ENCODE measurements at regions of chr1 and their contacts with region 1.

Region 1: GRCh38 chr1:43171876-43172526 is at the starts of genes CFAP57 and EBNA1BP2:
- DNase-seq: peak; percentile 83 to 97 (median 88)
- ATAC-seq: peak; percentile 75
- H3K4me3 ChIP-seq: peak within 1 kb of the TSS; percentile 93
- H3K4me3 Mint-ChIP-seq: peak within 1 kb of the TSS; percentile 96
- H3K27ac ChIP-seq: peak within 1 kb of the TSS; percentile 25 to 69
- H3K27ac Mint-ChIP-seq: peak within 1 kb of the TSS; percentile 82
- H3K4me1 ChIP-seq: peaks cover 14% of the 10 kb centered on the region
- H3K4me1 Mint-ChIP-seq: peaks cover 33% of the 10 kb centered on the region
- H3K27me3 ChIP-seq: peaks cover 9 to 14% of the 10 kb centered on the region in 2 experiments
- H3K27me3 Mint-ChIP-seq: peaks cover 16% of the 10 kb centered on the region
- CTCF ChIP-seq: no peak
- total RNA-seq, gene CFAP57: not detected
- total RNA-seq, gene EBNA1BP2: 14.8 to 15.1 TPM

Region 2: GRCh38 chr1:41360993-41361753 is 1810.8 kb before region 1 on chr1 and contains the start of gene FOXO6:
- CTCF ChIA-PET with region 1: no interaction called
- POLR2A ChIA-PET with region 1: no interaction called
- intact Hi-C with region 1: loop called in 1 of 2 experiments (anchors 10 kb)
- DNase-seq: peak; percentile 86 to 97 (median 93)
- ATAC-seq: peak; percentile 86
- H3K4me3 ChIP-seq: peak within 1 kb of the TSS; percentile 42
- H3K4me3 Mint-ChIP-seq: peak within 1 kb of the TSS; percentile 89
- H3K27ac ChIP-seq: no peak within 1 kb of the TSS
- H3K27ac Mint-ChIP-seq: peak within 1 kb of the TSS; percentile 77
- H3K4me1 ChIP-seq: peaks cover 34% of the 10 kb centered on the region
- H3K4me1 Mint-ChIP-seq: peaks cover 19% of the 10 kb centered on the region
- H3K27me3 ChIP-seq: peaks cover 19 to 25% of the 10 kb centered on the region in 2 experiments
- H3K27me3 Mint-ChIP-seq: peaks cover 30% of the 10 kb centered on the region
- CTCF ChIP-seq: peak; percentile 18
- total RNA-seq, gene FOXO6: 1.2 to 2.2 TPM

Region 3: GRCh38 chr1:42681741-42682483 is 490.1 kb before region 1 on chr1 and contains the start of gene YBX1:
- CTCF ChIA-PET with region 1: no interaction called
- POLR2A ChIA-PET with region 1: no interaction called
- intact Hi-C with region 1: loop called in 1 of 2 experiments (anchors 5 kb)
- DNase-seq: peak; percentile 89 to 99 (median 93)
- ATAC-seq: peak; percentile 90
- H3K4me3 ChIP-seq: peak within 1 kb of the TSS; percentile 80
- H3K4me3 Mint-ChIP-seq: peak within 1 kb of the TSS; percentile 100
- H3K27ac ChIP-seq: peak within 1 kb of the TSS; percentile 83 to 87
- H3K27ac Mint-ChIP-seq: peak within 1 kb of the TSS; percentile 94
- H3K4me1 ChIP-seq: peaks cover 36% of the 10 kb centered on the region
- H3K4me1 Mint-ChIP-seq: peaks cover 50% of the 10 kb centered on the region
- H3K27me3 ChIP-seq: no peaks in the 10 kb centered on the region
- H3K27me3 Mint-ChIP-seq: no peaks in the 10 kb centered on the region
- CTCF ChIP-seq: no peak
- total RNA-seq, gene YBX1: 372 to 389 TPM

Region 4: DNA sequence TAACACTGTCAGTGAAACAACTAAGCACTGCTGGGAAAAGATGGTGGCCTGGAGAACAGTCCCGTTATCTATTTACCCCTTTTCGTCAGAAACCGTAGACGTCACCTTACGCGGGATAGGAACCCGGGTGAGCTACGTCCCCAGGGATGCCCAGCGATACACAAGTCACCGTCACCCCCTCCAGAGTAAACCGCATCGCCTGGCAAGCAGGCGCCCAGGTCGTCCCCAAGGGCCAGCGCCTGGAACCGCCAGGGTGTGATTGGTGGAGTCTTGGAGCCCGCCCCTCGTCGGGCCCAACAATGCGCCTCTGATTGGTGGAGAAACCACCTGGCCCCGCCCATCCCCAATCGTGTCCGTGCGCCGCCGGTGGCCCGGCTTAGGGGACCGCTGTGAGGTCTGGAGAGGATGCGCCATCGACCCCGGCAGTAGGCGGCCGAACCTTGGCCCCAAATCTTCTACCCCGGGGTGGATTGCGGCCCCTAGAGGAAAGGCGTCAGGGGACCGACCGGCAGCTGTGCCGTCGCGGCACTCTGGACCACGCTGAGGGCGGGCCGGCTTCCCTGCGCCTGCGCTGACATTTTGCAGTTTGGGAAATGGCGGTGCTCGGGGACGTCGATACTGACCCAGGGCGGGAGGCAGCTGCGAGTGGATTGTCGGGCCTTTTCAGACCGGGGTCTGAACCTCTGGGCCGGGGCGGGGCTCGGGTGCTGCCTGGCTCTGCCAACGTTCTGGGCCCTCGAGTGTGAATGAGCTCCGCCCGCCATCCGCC is 247.7 kb before region 1 on chr1:
- CTCF ChIA-PET with region 1: no interaction called
- POLR2A ChIA-PET with region 1: no interaction called
- intact Hi-C with region 1: loop called in 1 of 2 experiments (anchors 5 kb)
- DNase-seq: peak; percentile 81 to 94 (median 88)
- ATAC-seq: peak; percentile 89
- H3K4me3 ChIP-seq: peak overlapping the region; percentile 81
- H3K4me3 Mint-ChIP-seq: peak overlapping the region; percentile 94
- H3K27ac ChIP-seq: peak overlapping the region; percentile 66 to 86
- H3K27ac Mint-ChIP-seq: peak overlapping the region; percentile 84
- H3K4me1 ChIP-seq: peaks cover 22% of the 10 kb centered on the region
- H3K4me1 Mint-ChIP-seq: peaks cover 40% of the 10 kb centered on the region
- H3K27me3 ChIP-seq: no peaks in the 10 kb centered on the region
- H3K27me3 Mint-ChIP-seq: no peaks in the 10 kb centered on the region
- CTCF ChIP-seq: no peak

Region 5: DNA sequence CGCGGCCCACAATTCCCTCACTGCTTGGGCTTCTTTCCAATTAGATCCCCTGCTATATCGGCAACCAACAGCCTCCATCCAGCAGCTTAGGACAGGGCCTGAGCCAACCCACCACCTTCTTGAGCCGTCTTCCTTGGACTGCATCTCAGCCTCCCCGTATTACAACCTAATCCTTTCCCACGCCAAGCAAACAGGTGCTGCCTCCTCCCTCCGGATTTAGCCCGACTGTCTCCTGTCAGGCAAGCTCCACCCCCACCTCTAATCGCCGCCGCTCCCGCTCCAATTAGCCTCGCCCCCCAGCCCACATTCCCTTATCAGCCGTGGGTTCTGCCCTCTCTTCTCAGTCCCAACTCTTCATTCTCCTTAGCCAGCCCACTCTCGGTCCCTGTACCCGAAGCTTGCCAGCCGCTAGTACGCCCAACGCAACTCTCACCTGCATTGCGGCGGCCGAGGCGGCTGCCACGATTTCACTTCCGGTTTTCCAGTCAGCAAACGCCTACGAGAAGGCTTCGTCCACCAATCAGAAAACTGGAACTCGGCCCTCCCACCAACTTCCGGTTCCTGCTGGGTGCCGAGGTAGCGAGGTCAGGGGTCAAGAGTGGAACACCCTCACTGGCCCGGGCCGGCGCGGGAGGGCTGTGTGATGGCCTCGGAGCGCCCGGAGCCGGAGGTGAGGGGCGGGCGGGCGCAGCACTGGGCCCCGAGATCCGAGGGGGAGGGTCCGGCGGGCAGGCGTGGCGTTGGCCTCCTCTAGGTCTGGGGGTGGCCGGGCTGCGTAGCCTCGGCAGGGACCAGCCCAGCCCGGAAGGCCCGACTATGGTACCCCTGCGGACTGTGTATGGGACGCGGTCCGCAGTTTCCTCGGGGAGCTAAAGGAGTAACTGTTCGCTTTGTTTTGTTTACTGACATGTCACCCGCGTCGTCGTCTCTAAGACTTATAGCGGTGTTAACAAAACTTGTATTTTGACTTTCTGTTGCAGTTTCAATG is 217.6 kb after region 1 on chr1 and contains the starts of genes MED8 and SZT2:
- CTCF ChIA-PET with region 1: no interaction called
- POLR2A ChIA-PET with region 1: no interaction called
- intact Hi-C with region 1: loop called in 1 of 2 experiments (anchors 2 kb)
- DNase-seq: peak; percentile 86 to 95 (median 92)
- ATAC-seq: peak; percentile 89
- H3K4me3 ChIP-seq: peak within 1 kb of the TSS; percentile 86
- H3K4me3 Mint-ChIP-seq: peak within 1 kb of the TSS; percentile 100
- H3K27ac ChIP-seq: peak within 1 kb of the TSS; percentile 55
- H3K27ac Mint-ChIP-seq: peak within 1 kb of the TSS; percentile 86
- H3K4me1 ChIP-seq: peaks cover 27% of the 10 kb centered on the region
- H3K4me1 Mint-ChIP-seq: peaks cover 44% of the 10 kb centered on the region
- H3K27me3 ChIP-seq: no peaks in the 10 kb centered on the region
- H3K27me3 Mint-ChIP-seq: no peaks in the 10 kb centered on the region
- CTCF ChIP-seq: no peak
- total RNA-seq, gene MED8: 14.8 to 17.6 TPM
- total RNA-seq, gene SZT2: 69.7 to 72.5 TPM

Region 6: GRCh38 chr1:43914576-43915505 is 742.8 kb after region 1 on chr1:
- CTCF ChIA-PET with region 1: no interaction called
- POLR2A ChIA-PET with region 1: no interaction called
- intact Hi-C with region 1: no loop called
- DNase-seq: no peak
- ATAC-seq: no peak
- H3K4me3 ChIP-seq: no peak overlapping the region
- H3K4me3 Mint-ChIP-seq: no peak overlapping the region
- H3K27ac ChIP-seq: no peak overlapping the region
- H3K27ac Mint-ChIP-seq: no peak overlapping the region
- H3K4me1 ChIP-seq: no peaks in the 10 kb centered on the region
- H3K4me1 Mint-ChIP-seq: no peaks in the 10 kb centered on the region
- H3K27me3 ChIP-seq: no peaks in the 10 kb centered on the region
- H3K27me3 Mint-ChIP-seq: no peaks in the 10 kb centered on the region
- CTCF ChIP-seq: no peak

Region 7: DNA sequence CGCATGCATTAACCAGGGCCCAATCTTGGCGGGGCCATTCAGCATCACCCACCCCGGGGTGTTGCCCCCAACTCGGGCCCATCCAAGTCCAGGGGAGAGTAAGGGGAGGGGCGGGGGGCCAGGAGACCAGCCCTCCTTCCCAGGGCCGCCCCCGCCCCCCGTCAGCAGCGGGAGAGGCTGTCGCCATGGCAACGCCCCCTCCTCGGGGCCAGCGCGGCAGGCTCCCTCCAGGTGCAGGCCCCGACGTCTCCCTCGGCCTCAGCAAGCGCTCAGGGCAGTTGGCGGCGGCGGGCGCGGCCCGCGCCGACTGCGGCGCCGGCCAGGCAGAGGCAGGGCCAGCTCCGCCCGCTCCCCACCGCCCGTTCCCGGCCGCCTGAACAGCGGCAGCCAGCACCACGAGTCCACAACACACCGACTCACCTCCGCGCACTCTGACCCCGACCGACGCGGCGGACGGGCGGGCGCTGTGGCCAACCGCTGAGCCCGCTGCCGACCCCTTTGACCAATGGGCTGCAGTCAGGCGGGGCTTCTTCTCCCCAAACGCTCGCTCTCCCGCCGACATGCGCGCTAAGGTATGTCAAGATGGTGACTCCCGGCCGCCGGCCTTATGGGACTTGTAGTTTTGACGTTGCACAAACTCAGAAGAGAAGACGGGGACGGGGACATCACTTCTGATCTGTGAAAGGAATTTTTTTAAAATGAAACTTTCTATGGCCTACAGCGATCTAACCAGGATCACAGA is 1183.0 kb after region 1 on chr1 and contains the start of gene ERI3:
- CTCF ChIA-PET with region 1: no interaction called
- POLR2A ChIA-PET with region 1: no interaction called
- intact Hi-C with region 1: loop called in 1 of 2 experiments (anchors 10 kb)
- DNase-seq: peak; percentile 93 to 98 (median 95)
- ATAC-seq: peak; percentile 100
- H3K4me3 ChIP-seq: peak within 1 kb of the TSS; percentile 80
- H3K4me3 Mint-ChIP-seq: peak within 1 kb of the TSS; percentile 94
- H3K27ac ChIP-seq: peak within 1 kb of the TSS in 1 of 2 donors; percentile 29
- H3K27ac Mint-ChIP-seq: peak within 1 kb of the TSS; percentile 63
- H3K4me1 ChIP-seq: peaks cover 19% of the 10 kb centered on the region
- H3K4me1 Mint-ChIP-seq: peaks cover 45% of the 10 kb centered on the region
- H3K27me3 ChIP-seq: no peaks in the 10 kb centered on the region
- H3K27me3 Mint-ChIP-seq: no peaks in the 10 kb centered on the region
- CTCF ChIP-seq: no peak
- total RNA-seq, gene ERI3: 19.7 to 20.7 TPM

Measured in CD4-positive, alpha-beta T cell (primary cell).